Calu3 (cell line): ENCODE measurements at regions of chr1 and their contacts with region 1.

Region 1: GRCh38 chr1:168603501-168604110 is 27.2 kb downstream of the XCL1 start:
- DNase-seq: peak; percentile 87
- H3K4me3 Mint-ChIP-seq: no peak overlapping the region
- H3K27ac Mint-ChIP-seq: no peak overlapping the region
- H3K4me1 Mint-ChIP-seq: peaks cover 24% of the 10 kb centered on the region
- H3K27me3 Mint-ChIP-seq: no peaks in the 10 kb centered on the region
- CTCF ChIP-seq: peak; percentile 83

Region 2: DNA sequence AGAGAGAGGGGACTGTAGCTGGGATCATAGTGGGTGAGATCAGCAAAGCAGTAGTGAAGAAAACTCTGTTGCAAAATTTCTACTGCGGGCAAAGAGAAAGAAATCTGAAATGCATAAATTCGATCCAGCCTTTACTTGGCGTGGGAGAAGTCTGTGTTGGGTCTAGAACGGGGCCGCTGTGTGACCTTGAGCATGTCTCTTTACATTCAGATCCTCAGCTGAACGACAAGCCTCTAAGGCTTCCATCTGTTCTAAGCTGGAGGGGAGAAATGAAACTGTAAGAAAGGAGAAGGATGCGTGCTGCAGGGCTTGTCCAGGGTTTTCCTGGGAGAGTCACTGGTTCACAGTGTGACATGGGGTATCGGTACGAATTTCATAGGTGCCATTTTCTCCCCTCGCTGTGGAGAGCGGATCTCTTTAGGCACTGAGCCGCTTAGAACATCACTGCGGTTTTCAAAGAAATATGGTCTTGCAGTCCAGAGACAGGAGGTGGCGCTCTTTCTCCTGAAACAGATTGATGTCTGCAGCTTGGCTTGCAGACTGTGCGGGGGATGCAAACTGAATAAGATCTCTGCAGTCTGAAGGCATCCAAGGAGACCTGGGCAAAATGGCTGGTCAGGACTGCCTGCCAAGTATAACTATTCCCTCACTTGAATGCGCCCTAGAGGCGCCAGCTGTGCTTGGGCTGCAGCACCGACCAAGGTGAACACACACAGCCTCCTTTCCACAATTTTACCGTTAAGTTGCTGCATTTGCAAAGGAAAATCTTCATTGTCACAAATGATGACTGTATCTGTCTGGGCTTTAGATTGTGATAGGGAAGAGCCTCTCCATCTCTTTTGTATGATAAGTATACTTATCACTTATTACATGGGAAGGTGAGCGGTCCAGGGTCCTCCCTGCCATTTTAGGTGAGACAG is 163.9 kb before region 1 on chr1:
- CTCF ChIA-PET with region 1: interaction called, 16 read pairs
- intact Hi-C with region 1: no loop called
- DNase-seq: peak; percentile 88
- H3K4me3 Mint-ChIP-seq: peak overlapping the region; percentile 55
- H3K27ac Mint-ChIP-seq: no peak overlapping the region
- H3K4me1 Mint-ChIP-seq: peaks cover 28% of the 10 kb centered on the region
- H3K27me3 Mint-ChIP-seq: peaks cover 9% of the 10 kb centered on the region
- CTCF ChIP-seq: peak; percentile 92

Region 3: DNA sequence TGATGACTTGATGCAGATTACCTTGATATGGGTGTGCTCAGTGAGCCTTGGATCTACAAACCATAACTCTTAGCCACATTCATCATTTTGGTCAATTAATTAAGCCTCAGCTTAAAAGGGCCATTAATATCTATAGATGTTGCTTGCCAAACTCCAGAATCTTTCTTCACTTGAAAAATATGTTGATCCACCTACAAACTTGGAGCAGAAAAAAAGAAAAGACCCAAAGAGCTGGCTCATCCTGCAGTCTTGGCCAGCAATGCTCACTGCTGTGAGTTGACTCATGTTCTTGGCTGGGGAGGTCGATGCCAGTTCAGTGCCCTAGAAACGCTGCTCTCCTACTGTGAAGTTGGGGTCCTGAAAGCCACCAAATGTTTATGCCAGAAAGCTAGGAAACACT is 50.0 kb after region 1 on chr1:
- CTCF ChIA-PET with region 1: no interaction called
- intact Hi-C with region 1: no loop called
- DNase-seq: no peak
- H3K4me3 Mint-ChIP-seq: no peak overlapping the region
- H3K27ac Mint-ChIP-seq: no peak overlapping the region
- H3K4me1 Mint-ChIP-seq: no peaks in the 10 kb centered on the region
- H3K27me3 Mint-ChIP-seq: no peaks in the 10 kb centered on the region
- CTCF ChIP-seq: no peak

Region 4: DNA sequence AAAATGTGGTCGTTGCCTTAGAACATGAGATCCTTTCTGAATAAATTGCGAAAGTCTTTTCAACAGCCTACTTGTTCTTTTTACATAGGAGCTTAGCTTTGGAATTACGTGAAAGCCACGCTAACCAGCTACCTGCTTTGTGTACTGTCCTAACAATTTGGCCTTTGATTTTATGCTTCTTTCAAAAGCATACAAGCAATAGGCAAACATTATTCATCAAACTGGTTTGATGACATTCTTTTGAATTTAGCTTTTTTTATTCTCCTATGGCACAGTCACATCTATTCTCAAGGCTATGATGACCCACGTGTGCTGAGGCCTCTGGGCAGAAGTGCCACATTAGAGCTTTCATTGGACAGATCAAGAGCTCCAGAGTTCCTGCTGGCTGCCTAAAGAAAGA is 303.4 kb after region 1 on chr1:
- CTCF ChIA-PET with region 1: interaction called, 17 read pairs
- intact Hi-C with region 1: loop called (anchors 10 kb)
- DNase-seq: peak; percentile 61
- H3K4me3 Mint-ChIP-seq: peak overlapping the region; percentile 36
- H3K27ac Mint-ChIP-seq: peak overlapping the region; percentile 98
- H3K4me1 Mint-ChIP-seq: peaks cover 53% of the 10 kb centered on the region
- H3K27me3 Mint-ChIP-seq: no peaks in the 10 kb centered on the region
- CTCF ChIP-seq: no peak

Region 5: DNA sequence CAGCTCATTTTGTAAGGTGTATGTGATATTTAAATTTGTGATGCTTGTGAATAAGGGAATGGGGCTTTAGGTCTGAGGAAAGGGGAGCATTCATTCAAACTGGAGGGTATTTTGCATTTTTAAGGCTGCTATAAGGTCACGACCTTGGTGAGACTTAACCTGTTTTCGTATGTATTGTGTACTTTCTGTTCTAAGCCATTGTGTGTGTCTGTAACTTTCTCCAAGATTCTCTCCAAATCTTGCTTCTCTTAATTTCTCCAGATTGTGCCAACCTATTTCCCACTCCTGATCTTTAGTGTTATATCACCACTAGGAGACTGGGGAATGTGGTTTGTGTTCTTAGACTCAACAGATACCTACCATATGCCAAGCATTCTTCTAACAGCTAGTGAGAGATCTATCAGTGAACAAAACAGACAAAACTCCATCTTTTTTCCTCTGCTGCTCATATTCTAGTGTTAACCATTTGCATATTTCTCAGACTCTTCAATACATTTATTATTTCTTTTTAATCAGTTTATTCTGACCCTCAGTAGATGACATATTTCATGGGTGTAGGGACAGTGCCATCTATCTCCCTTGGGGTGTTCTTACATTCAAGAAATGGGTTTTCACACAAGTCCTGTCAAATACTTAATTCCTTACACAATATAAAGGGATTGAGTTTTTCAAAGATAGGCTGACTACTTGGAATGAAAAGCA is 530.3 kb after region 1 on chr1:
- CTCF ChIA-PET with region 1: no interaction called
- intact Hi-C with region 1: loop called (anchors 10 kb)
- DNase-seq: no peak
- H3K4me3 Mint-ChIP-seq: no peak overlapping the region
- H3K27ac Mint-ChIP-seq: peak overlapping the region; percentile 80
- H3K4me1 Mint-ChIP-seq: peaks cover 55% of the 10 kb centered on the region
- H3K27me3 Mint-ChIP-seq: no peaks in the 10 kb centered on the region
- CTCF ChIP-seq: no peak

Region 6: GRCh38 chr1:169271098-169271497 is 667.5 kb after region 1 on chr1:
- CTCF ChIA-PET with region 1: no interaction called
- intact Hi-C with region 1: loop called (anchors 5 kb)
- DNase-seq: no peak
- H3K4me3 Mint-ChIP-seq: peak overlapping the region; percentile 40
- H3K27ac Mint-ChIP-seq: peak overlapping the region; percentile 66
- H3K4me1 Mint-ChIP-seq: peaks cover 13% of the 10 kb centered on the region
- H3K27me3 Mint-ChIP-seq: no peaks in the 10 kb centered on the region
- CTCF ChIP-seq: peak; percentile 8

Region 7: GRCh38 chr1:169451218-169451845 is 847.7 kb after region 1 on chr1:
- CTCF ChIA-PET with region 1: no interaction called
- intact Hi-C with region 1: loop called (anchors 10 kb)
- DNase-seq: no peak
- H3K4me3 Mint-ChIP-seq: no peak overlapping the region
- H3K27ac Mint-ChIP-seq: no peak overlapping the region
- H3K4me1 Mint-ChIP-seq: peaks cover 32% of the 10 kb centered on the region
- H3K27me3 Mint-ChIP-seq: no peaks in the 10 kb centered on the region
- CTCF ChIP-seq: no peak